ENCODE measurements at regions of chr4 and their contacts with region 1.

Region 1: DNA sequence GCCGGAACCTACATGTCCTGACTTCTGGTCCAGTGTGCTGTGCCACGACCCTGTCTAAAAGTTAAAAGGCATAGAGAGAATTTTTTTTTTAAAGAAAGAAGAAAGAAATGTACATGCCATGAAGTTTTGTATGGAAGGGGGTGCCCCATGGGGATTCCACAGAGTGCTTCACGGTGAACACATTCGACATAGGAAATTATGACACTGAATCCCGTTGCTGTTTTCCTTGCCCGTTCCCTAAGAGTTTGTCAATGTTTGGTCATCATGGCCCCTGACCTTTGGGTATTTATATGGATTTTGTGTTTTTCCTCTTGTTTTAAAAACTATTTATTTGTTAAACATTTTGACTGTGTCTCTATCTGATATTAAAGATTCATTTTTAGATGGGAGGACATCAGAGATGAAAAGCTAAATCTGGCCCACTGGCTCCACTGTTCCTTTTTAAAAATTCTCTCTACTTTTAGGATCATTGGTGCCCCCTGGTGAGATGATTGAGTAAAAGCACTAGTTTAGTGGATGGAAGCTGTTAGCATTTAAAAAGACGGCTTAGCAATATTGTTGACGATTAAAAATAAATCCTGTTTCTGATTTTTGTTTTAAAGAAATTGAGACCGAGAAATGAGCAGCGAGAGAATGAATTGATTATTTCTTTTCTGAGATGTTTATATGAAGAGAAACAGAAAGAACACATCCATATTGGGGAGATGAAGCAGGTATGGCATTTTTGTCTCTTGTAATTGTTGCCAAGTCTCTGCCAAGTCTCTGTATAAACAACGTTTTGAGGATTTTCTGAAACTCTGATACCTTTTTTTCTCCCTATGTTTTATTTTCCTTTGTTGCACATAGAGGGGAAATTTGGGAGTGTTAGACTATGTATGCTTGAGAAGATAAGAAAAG is 75.0 kb downstream of the PTTG2 start:
- DNase-seq: peak in 1 of 5 donors; percentile 56
- H3K4me3 ChIP-seq: no peak overlapping the region
- H3K27ac ChIP-seq: no peak overlapping the region
- H3K4me1 ChIP-seq: no peaks in the 10 kb centered on the region
- H3K27me3 ChIP-seq: no peaks in the 10 kb centered on the region
- CTCF ChIP-seq: peak; percentile 51 to 82 (median 68)
- EP300 ChIP-seq: no peak
- POLR2A ChIP-seq: no peak

Region 2: DNA sequence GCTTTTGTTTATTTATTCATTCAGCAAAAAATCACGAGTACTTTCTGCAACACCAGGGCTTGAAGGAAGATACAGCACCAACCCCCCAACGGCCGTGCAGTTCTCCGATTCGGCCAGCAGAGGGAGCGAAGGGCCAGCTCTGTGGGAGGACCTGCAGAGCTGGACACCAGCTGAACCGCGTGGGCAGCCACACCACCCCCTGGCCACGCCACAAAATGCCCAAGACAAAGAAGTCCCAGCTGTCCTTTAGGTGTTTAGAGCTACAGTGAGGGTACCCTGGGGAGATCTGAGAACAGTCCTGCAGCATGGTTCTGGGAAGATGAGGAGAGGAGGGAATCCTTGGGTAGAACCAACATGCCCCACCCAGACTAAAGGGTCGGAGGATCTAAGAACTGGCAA is 432.2 kb before region 1 on chr4:
- intact Hi-C with region 1: loop called in 2 of 4 experiments (anchors 5 kb)
- DNase-seq: peak; percentile 69 to 88 (median 84)
- H3K4me3 ChIP-seq: no peak overlapping the region
- H3K27ac ChIP-seq: no peak overlapping the region
- H3K4me1 ChIP-seq: peaks cover 2% of the 10 kb centered on the region
- H3K27me3 ChIP-seq: no peaks in the 10 kb centered on the region
- CTCF ChIP-seq: peak; percentile 76 to 92 (median 88)
- EP300 ChIP-seq: no peak
- POLR2A ChIP-seq: no peak

Region 3: DNA sequence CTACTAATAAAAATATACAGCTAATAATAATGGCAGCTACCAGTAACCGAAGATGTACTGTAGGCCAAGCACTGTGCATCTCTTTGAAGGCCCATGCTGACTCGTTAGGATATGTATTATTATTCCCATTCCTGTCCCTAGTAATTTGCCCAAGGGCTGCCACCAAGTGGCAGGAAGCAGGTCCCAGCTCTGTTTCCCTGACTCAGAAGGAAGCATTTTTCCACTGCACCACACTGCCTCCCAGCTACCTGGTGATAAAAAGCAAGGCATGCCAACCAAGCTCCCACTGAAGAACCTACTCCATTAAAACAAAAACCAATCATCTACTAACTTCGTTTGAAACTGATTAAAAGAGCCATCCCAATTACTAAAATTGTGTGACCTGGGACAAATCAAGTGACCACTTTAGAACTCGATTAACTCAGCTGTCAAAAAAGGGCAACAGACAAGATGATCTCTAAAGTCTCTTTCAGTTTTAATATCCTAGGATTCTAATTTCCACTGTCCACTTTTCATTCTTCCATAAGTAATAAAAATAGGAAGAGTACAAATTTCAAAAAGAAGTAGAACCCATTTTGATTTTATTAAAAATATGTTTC is 233.1 kb before region 1 on chr4:
- intact Hi-C with region 1: loop called in 3 of 4 experiments (anchors 5 to 10 kb)
- DNase-seq: peak in 2 of 5 donors; percentile 9 to 20
- H3K4me3 ChIP-seq: no peak overlapping the region
- H3K27ac ChIP-seq: no peak overlapping the region
- H3K4me1 ChIP-seq: no peaks in the 10 kb centered on the region
- H3K27me3 ChIP-seq: no peaks in the 10 kb centered on the region
- CTCF ChIP-seq: no peak
- EP300 ChIP-seq: no peak
- POLR2A ChIP-seq: no peak

Region 4: DNA sequence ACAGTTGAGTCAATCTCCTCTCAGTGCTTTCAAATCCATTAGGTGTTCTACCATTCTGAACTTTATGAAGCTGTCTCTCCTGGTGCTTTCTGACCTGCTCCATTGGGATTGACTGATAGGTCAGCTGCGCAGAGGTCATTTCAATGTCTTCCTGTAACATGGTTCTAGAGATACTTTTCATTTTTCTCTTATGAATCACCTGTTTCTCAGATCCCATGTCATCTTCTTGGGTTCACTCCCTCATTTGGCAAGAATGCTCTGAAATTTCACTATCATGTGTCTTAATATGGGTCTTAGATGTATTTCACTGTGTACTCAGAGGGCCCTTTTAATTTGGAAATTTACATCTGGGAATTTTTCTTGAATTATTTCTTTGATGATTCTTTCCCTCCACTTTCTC is 222.5 kb before region 1 on chr4:
- intact Hi-C with region 1: loop called in 3 of 4 experiments (anchors 5 to 10 kb)
- DNase-seq: no peak
- H3K4me3 ChIP-seq: no peak overlapping the region
- H3K27ac ChIP-seq: no peak overlapping the region
- H3K4me1 ChIP-seq: no peaks in the 10 kb centered on the region
- H3K27me3 ChIP-seq: no peaks in the 10 kb centered on the region
- CTCF ChIP-seq: no peak
- EP300 ChIP-seq: no peak
- POLR2A ChIP-seq: no peak

Region 5: DNA sequence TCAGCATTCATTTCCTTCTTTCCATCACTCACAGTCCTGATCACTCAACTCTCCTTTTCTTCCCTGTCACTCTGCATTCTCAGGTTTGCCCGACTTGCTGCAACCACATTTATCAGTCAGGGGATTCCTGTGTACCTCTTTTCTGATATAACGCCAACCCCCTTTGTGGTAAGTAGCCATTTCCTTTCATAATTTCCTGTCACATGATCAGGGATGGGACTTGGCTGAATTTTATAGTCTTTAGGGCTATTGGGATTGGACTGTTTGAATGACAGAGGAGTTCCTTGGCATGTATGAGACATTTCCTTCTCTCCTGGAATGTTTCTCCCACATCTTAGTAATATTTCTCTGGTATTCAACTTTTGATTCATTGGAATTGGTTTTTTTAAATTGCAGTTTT is 197.8 kb before region 1 on chr4:
- intact Hi-C with region 1: loop called in 1 of 4 experiments (anchors 10 kb)
- DNase-seq: no peak
- H3K4me3 ChIP-seq: no peak overlapping the region
- H3K27ac ChIP-seq: no peak overlapping the region
- H3K4me1 ChIP-seq: no peaks in the 10 kb centered on the region
- H3K27me3 ChIP-seq: no peaks in the 10 kb centered on the region
- CTCF ChIP-seq: no peak
- EP300 ChIP-seq: no peak
- POLR2A ChIP-seq: no peak

Region 6: DNA sequence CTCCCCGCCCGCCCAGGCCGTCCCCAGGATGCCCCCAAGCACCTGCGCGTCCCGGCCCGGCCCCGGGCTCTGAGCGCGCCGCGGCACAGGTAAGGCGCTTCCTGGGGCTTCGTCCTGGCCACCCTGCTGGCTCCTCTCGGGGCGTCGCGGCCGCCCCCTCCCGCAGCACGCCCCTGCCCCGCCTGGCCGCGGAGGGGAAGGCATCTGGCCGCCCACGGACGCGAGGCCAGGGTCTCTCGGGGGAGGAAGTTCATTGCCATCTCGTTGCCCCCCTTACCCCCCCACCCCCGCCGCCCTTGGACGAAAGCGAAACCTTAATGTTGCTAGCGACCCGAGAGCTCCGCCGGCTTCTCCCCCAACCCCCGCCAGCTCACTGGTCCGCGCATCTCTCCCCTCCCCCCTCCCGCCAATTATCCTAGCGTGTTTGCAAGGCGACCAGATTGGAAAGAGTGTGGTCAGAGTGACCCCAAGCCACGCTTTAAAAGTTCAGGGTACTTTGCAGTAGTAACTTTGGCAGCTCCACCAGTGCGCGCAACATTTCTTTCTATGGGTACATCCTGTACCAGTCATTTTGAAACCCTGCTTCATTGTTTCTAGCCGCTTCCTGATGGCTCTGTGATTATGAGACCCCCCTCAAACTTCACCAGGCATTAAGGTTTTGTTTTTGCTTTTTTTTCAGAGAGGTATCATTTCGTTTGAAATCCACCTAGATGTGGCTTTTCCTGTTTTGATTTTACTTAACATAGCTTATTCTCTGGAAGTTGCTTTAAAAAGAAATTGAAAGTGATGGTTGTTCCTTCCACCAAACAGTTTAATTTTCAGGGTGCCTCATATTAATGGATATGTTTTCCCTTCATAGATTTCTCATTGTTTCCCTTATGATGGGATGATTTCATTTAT is 143.7 kb before region 1 on chr4:
- intact Hi-C with region 1: loop called in 1 of 4 experiments (anchors 10 kb)
- DNase-seq: peak in 4 of 5 donors; percentile 30 to 58 (median 52)
- H3K4me3 ChIP-seq: peak overlapping the region; percentile 77
- H3K27ac ChIP-seq: peak overlapping the region; percentile 72 to 90
- H3K4me1 ChIP-seq: no peaks in the 10 kb centered on the region
- H3K27me3 ChIP-seq: no peaks in the 10 kb centered on the region
- CTCF ChIP-seq: no peak
- EP300 ChIP-seq: no peak
- POLR2A ChIP-seq: no peak

Region 7: DNA sequence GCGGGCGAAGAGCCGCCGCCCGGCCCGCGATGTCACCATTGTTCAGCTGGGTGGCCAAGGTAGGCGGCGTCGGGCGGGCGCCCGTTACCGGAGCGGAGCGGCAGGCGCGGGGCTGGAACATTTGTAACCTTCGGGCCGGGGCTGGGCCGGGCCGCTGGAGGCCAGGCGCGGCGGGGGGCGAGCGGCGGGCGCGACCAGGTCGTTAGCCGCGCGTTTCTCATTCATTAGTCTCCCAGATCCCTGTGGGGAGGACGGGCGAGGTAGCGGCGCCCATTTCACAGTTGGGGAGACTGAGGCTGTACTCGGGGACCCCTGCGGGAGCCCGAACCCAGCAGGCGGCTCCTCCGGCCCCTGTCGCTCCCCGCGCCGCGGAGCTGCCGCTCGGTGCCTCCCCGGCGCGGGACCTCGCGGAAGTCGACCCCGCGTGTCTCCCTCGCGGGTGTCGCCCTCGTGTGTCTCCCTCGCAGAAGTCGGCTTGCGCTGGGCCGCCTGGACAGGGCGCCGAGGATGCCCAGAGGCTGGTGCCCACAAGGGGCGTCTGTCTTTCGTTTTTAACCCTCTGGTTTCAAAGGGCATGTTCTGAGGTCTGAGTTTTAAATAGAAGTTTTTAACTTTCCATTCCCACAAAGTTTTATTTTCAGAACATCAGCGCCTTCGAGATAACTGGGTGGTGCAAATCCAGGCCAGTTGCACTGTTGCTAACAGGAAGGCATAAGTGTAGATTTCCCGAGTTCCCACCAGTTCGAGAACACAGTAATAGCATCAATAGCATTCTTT is 57.6 kb before region 1 on chr4:
- intact Hi-C with region 1: loop called in 1 of 4 experiments (anchors 10 kb)
- DNase-seq: peak; percentile 63 to 80 (median 75)
- H3K4me3 ChIP-seq: peak overlapping the region; percentile 55
- H3K27ac ChIP-seq: peak overlapping the region; percentile 86 to 92
- H3K4me1 ChIP-seq: peaks cover 7% of the 10 kb centered on the region
- H3K27me3 ChIP-seq: no peaks in the 10 kb centered on the region
- CTCF ChIP-seq: peak; percentile 52 to 55 (median 53)
- EP300 ChIP-seq: no peak
- POLR2A ChIP-seq: peak; percentile 10